PC-3 (cell line): ENCODE measurements at regions of chr5 and their contacts with region 1.

Region 1: DNA sequence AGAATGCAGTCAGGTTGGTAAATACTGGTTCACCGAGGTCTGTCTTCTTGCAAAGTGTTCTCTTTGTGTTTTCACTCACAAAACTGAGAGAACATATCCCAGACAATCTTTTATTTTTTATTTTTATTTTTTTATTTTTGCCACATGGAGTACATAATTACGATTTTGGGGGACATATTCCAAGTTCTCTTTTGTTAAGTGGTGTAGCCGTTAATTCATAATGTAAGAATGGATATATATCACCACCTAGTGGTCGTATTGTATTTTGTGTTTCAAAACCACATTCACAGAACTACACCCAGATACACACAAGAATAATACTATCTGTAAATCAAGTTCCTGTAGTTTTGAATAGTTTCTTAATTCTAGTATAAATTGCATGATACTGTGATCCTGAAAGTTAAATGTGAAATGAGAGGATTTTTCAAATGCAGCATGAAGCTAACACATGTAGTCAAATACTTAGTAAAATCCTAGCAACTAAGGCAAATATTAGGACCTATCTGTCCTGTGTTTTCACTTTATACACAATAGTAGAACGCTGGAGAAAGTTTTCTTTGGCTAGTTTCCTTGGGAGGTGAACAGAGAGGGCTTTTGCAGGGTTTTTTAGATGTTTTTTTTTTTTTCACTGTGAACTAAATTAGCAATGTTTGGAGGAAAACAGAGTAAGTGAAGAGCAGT is 92.7 kb downstream of the VCAN start:
- DNase-seq: peak; percentile 70
- ATAC-seq: peak; percentile 63
- H3K4me3 ChIP-seq: peak overlapping the region; percentile 38; the same call in 1 of the 2 replicates
- H3K27ac ChIP-seq: peak overlapping the region; percentile 61
- H3K4me1 ChIP-seq: peaks cover 35% of the 10 kb centered on the region
- H3K27me3 ChIP-seq: no peaks in the 10 kb centered on the region
- CTCF ChIP-seq: peak; percentile 75

Region 2: DNA sequence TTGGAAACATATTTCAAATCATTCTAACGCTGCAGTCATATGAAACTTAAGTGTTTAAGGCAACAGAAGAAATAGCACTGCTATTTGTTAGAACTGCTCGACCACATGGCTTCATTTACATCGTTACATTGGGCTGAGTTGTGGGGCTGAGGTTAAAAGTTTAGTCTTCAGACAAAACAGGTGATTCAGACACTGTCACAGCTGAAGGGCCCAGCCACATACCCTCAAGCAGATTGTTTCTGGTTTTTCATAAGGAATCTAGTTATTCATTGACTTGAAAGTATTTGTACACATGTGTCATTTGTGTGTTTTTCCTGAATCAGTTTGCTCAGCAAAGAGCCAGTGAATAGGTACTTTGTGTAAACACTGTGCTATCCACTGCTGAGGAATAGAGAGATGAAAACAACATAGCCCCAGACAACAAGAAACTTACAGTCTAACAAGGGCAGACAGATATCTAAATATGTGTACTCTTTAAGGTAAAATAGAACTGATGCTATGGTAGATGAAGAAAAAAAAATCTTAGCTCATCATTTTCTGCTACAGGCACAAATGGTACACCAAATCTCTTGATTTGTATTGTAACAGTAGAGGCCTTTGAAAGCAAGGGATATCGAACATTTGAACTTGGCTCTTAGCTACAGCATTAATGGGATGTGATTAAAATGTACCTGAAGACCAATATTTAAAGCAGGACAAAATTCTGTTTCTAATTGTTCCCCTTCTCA is 928.5 kb before region 1 on chr5:
- CTCF ChIA-PET with region 1: no interaction called
- POLR2A ChIA-PET with region 1: no interaction called
- intact Hi-C with region 1: loop called (anchors 2 kb)
- DNase-seq: peak; percentile 96
- ATAC-seq: peak; percentile 95
- H3K4me3 ChIP-seq: no peak overlapping the region
- H3K27ac ChIP-seq: peak overlapping the region; percentile 92
- H3K4me1 ChIP-seq: peaks cover 40% of the 10 kb centered on the region
- H3K27me3 ChIP-seq: no peaks in the 10 kb centered on the region
- CTCF ChIP-seq: no peak

Region 3: GRCh38 chr5:83095957-83096539 is 468.2 kb before region 1 on chr5:
- CTCF ChIA-PET with region 1: no interaction called
- POLR2A ChIA-PET with region 1: no interaction called
- intact Hi-C with region 1: loop called (anchors 10 kb)
- DNase-seq: peak; percentile 89
- ATAC-seq: peak; percentile 97
- H3K4me3 ChIP-seq: no peak overlapping the region
- H3K27ac ChIP-seq: peak overlapping the region; percentile 38; the same call in 1 of the 2 replicates
- H3K4me1 ChIP-seq: peaks cover 39% of the 10 kb centered on the region
- H3K27me3 ChIP-seq: no peaks in the 10 kb centered on the region
- CTCF ChIP-seq: no peak

Region 4: GRCh38 chr5:83430130-83431010 is 133.8 kb before region 1 on chr5:
- CTCF ChIA-PET with region 1: interaction called, 3 read pairs
- POLR2A ChIA-PET with region 1: no interaction called
- intact Hi-C with region 1: loop called (anchors 2 kb)
- DNase-seq: peak; percentile 78
- ATAC-seq: peak; percentile 97
- H3K4me3 ChIP-seq: no peak overlapping the region
- H3K27ac ChIP-seq: no peak overlapping the region
- H3K4me1 ChIP-seq: no peaks in the 10 kb centered on the region; the same call in 1 of the 2 replicates
- H3K27me3 ChIP-seq: no peaks in the 10 kb centered on the region
- CTCF ChIP-seq: peak; percentile 99